SK-N-SH (cell line): ENCODE measurements at regions of chr1 and their contacts with region 1.

Region 1: GRCh38 chr1:90850898-90851710 is 134.0 kb upstream of the BARHL2 start:
- DNase-seq: peak; percentile 96
- H3K4me3 ChIP-seq: peak overlapping the region; percentile 87 to 91
- H3K27ac ChIP-seq: peak overlapping the region; percentile 37 to 43; a peak in 2 of 4 replicates
- H3K4me1 ChIP-seq: peaks cover 0 to 5% of the 10 kb centered on the region in 2 experiments; a peak in 2 of 4 replicates
- H3K27me3 ChIP-seq: no peaks in the 10 kb centered on the region
- CTCF ChIP-seq: peak; percentile 51
- EP300 ChIP-seq: no peak
- RAD21 ChIP-seq: no peak

Region 2: DNA sequence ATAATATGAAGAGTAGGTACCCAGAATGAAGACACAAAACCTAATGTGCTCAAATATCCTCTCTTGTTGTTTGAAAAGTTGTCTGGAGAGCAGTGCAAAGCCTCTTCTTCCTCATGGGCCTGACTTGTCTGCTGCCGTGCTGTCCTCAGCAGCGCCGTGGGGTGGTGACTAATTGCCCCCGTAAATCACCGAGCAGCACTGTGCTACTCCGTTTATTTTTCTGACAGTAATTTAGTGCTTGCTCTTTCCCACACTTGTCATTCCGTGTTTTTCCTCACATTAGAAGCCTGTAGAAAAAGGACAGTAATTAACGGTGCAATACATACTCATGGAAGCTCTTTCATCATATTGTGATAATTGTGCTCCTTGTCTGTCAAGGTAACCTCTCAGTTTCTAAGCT is 19.2 kb before region 1 on chr1:
- CTCF ChIA-PET with region 1: interaction called, 17 read pairs
- POLR2A ChIA-PET with region 1: interaction called, 3 read pairs
- DNase-seq: no peak
- H3K4me3 ChIP-seq: no peak overlapping the region
- H3K27ac ChIP-seq: no peak overlapping the region
- H3K4me1 ChIP-seq: peaks cover 0 to 2% of the 10 kb centered on the region in 2 experiments; a peak in 1 of 4 replicates
- H3K27me3 ChIP-seq: no peaks in the 10 kb centered on the region
- CTCF ChIP-seq: no peak
- EP300 ChIP-seq: no peak
- RAD21 ChIP-seq: no peak